CD4-positive, alpha-beta T cell (primary cell): ENCODE measurements at regions of chr1 and their contacts with region 1.

Region 1: DNA sequence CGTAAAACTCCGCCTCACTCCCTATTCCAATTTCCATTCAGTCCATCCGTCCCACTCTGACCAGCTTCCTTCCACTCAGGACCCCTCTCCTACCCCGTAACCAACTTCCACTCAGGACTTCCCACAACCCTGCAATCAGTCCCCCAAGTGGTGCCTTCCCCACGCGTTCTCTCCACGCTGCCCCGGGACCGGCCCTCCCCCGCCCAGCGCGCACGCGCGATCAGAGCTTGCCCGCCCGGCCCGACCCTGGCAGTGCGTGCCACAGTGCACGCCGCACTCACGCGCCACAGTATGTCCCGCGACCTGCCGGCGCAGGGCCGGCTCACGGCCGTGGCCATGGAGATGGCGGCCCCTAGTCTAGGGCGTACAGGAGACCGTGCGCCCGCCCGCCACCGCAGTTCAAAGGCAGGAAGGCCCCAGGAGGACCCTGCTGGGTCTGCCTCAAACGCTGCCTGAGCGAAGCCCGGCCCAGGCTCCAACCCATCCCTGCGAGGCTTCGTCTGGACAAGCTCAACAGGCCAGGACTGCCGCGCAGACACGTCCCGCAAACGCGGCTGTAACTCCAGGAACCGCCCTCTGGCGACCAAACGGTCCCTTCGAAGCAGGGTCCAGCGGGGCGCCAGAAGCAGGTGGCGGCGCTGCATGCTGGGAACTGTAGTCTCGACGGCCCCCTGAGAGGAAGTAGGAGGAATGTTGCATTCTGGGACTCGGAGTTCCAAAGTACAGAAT is at the start of gene NDC1:
- DNase-seq: peak; percentile 79 to 96 (median 86)
- ATAC-seq: peak; percentile 89
- H3K4me3 ChIP-seq: peak within 1 kb of the TSS; percentile 73
- H3K4me3 Mint-ChIP-seq: peak within 1 kb of the TSS; percentile 95
- H3K27ac ChIP-seq: peak within 1 kb of the TSS; percentile 95 to 98
- H3K27ac Mint-ChIP-seq: peak within 1 kb of the TSS; percentile 95
- H3K4me1 ChIP-seq: peaks cover 13% of the 10 kb centered on the region
- H3K4me1 Mint-ChIP-seq: peaks cover 37% of the 10 kb centered on the region
- H3K27me3 ChIP-seq: peaks cover 0 to 5% of the 10 kb centered on the region in 2 experiments
- H3K27me3 Mint-ChIP-seq: no peaks in the 10 kb centered on the region
- CTCF ChIP-seq: no peak
- total RNA-seq, gene NDC1: 5.4 to 8.1 TPM

Region 2: GRCh38 chr1:53244141-53244540 is 593.9 kb before region 1 on chr1:
- CTCF ChIA-PET with region 1: no interaction called
- POLR2A ChIA-PET with region 1: no interaction called
- intact Hi-C with region 1: loop called in 1 of 2 experiments (anchors 5 kb)
- DNase-seq: no peak
- ATAC-seq: no peak
- H3K4me3 ChIP-seq: no peak overlapping the region
- H3K4me3 Mint-ChIP-seq: no peak overlapping the region
- H3K27ac ChIP-seq: no peak overlapping the region
- H3K27ac Mint-ChIP-seq: no peak overlapping the region
- H3K4me1 ChIP-seq: peaks cover under 1% of the 10 kb centered on the region
- H3K4me1 Mint-ChIP-seq: peaks cover 1% of the 10 kb centered on the region
- H3K27me3 ChIP-seq: no peaks in the 10 kb centered on the region
- H3K27me3 Mint-ChIP-seq: no peaks in the 10 kb centered on the region
- CTCF ChIP-seq: no peak

Region 3: DNA sequence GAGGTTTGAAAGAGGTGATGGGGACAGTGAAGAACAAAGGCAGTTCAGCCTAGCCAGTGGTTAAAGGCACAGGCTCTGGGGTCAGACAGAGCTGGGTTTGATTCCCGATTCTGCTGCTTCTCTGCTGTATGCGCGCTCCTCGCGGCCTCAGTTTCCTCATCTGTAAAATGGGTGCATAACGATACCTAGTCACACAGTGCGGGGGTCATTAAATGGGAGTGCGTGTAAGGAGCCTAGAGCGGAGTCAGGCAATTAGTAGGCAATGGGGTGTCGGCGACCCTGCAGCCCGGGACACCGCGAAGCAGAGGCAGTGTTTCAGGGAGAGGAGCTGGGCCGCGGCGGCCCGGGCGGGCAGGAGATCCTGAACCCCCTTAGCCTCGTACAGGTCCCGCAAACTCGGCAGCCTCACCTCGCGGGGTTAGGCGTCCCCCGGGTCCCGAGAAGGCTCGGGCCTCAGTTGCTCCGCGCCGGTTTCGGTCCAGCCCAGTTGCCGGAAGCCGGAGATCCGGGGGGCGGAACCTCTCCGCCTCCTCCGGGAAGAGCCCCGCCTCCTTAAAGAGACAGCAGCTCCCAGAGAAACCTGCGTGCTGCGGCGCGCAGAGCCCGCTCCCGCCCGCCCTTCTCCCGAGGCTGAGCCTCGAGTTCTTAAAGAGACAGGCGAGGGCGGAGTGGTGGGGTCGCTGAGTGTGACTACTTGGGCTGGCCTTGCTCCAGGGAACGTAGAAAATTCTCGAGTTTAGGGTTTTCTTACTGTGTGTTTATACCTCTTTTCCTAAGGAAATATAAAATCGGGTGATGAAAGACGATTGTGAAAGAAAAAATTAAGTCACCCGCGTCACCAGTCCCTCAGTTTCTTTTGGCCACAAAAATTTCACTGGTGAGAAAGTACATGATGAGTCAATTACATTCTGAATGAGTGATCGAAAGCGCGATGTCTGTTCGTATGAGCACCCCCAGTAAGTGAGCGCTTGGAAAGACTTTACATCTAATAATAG is 51.5 kb after region 1 on chr1 and contains the start of gene YIPF1:
- CTCF ChIA-PET with region 1: no interaction called
- POLR2A ChIA-PET with region 1: interaction called, 3 read pairs
- intact Hi-C with region 1: loop called in 1 of 2 experiments (anchors 1 kb)
- DNase-seq: peak; percentile 69 to 92 (median 84)
- ATAC-seq: peak; percentile 99
- H3K4me3 ChIP-seq: peak within 1 kb of the TSS; percentile 98
- H3K4me3 Mint-ChIP-seq: peak within 1 kb of the TSS; percentile 94
- H3K27ac ChIP-seq: peak within 1 kb of the TSS; percentile 29 to 45
- H3K27ac Mint-ChIP-seq: peak within 1 kb of the TSS; percentile 93
- H3K4me1 ChIP-seq: peaks cover 18% of the 10 kb centered on the region
- H3K4me1 Mint-ChIP-seq: peaks cover 44% of the 10 kb centered on the region
- H3K27me3 ChIP-seq: no peaks in the 10 kb centered on the region
- H3K27me3 Mint-ChIP-seq: no peaks in the 10 kb centered on the region
- CTCF ChIP-seq: no peak
- total RNA-seq, gene YIPF1: 4.3 to 5.5 TPM

Region 4: GRCh38 chr1:54199765-54200518 is 361.9 kb after region 1 on chr1 and contains the starts of genes CYB5RL and MRPL37:
- CTCF ChIA-PET with region 1: no interaction called
- POLR2A ChIA-PET with region 1: no interaction called
- intact Hi-C with region 1: loop called in 1 of 2 experiments (anchors 5 kb)
- DNase-seq: peak; percentile 78 to 96 (median 84)
- ATAC-seq: peak; percentile 98
- H3K4me3 ChIP-seq: peak within 1 kb of the TSS; percentile 96
- H3K4me3 Mint-ChIP-seq: peak within 1 kb of the TSS; percentile 92
- H3K27ac ChIP-seq: peak within 1 kb of the TSS; percentile 22 to 37
- H3K27ac Mint-ChIP-seq: peak within 1 kb of the TSS; percentile 87
- H3K4me1 ChIP-seq: peaks cover 25% of the 10 kb centered on the region
- H3K4me1 Mint-ChIP-seq: peaks cover 34% of the 10 kb centered on the region
- H3K27me3 ChIP-seq: no peaks in the 10 kb centered on the region
- H3K27me3 Mint-ChIP-seq: no peaks in the 10 kb centered on the region
- CTCF ChIP-seq: no peak
- total RNA-seq, gene CYB5RL: 2.0 to 2.1 TPM
- total RNA-seq, gene MRPL37: 24.0 to 24.4 TPM

Region 5: DNA sequence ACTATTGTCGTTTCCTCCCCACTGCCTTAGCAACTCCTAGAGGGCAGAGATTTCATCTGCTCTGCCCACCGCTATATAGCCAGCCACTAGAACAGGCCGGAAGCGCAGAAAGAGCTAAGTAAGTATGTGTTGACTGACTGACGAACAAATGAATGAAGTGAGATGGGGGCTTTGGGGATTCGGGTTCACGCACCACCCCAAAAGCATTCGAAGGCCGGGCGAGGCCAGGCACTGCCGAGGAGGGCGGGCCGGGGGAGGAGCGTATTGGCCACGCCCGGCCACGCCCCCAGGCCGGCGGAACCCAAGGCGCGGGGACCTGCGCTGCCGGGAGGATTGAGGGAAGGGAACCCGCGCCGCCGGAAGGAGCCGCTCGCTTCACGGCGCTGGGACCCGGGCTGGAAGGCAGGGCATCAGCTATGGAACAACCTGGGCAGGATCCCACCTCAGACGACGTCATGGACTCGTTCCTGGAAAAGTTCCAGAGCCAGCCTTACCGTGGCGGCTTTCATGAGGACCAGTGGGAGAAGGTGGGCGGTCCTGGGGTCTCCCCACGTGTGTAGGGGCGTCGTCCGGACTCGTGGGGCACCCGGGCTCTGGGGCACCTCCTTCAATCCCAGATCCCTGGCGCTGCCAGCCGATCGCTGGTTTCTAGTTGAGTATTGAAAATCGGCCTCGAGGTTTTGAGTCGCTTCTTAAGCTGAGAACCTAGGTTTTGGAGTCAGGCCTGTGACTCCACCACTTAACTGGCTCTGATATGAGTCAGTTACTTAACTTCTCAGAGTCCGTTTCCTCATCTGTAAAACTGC is 877.6 kb after region 1 on chr1 and contains the start of gene TTC4:
- CTCF ChIA-PET with region 1: no interaction called
- POLR2A ChIA-PET with region 1: no interaction called
- intact Hi-C with region 1: loop called in 1 of 2 experiments (anchors 2 kb)
- DNase-seq: peak; percentile 67 to 93 (median 81)
- ATAC-seq: peak; percentile 97
- H3K4me3 ChIP-seq: peak within 1 kb of the TSS; percentile 87
- H3K4me3 Mint-ChIP-seq: peak within 1 kb of the TSS; percentile 93
- H3K27ac ChIP-seq: peak within 1 kb of the TSS; percentile 43 to 71
- H3K27ac Mint-ChIP-seq: peak within 1 kb of the TSS; percentile 74
- H3K4me1 ChIP-seq: peaks cover 18% of the 10 kb centered on the region
- H3K4me1 Mint-ChIP-seq: peaks cover 40% of the 10 kb centered on the region
- H3K27me3 ChIP-seq: no peaks in the 10 kb centered on the region
- H3K27me3 Mint-ChIP-seq: no peaks in the 10 kb centered on the region
- CTCF ChIP-seq: no peak
- total RNA-seq, gene TTC4: 7.3 to 7.6 TPM